Naive thymus-derived CD8-positive, alpha-beta T cell (primary cell): ENCODE measurements at regions of chr2 and their contacts with region 1.

Region 1: DNA sequence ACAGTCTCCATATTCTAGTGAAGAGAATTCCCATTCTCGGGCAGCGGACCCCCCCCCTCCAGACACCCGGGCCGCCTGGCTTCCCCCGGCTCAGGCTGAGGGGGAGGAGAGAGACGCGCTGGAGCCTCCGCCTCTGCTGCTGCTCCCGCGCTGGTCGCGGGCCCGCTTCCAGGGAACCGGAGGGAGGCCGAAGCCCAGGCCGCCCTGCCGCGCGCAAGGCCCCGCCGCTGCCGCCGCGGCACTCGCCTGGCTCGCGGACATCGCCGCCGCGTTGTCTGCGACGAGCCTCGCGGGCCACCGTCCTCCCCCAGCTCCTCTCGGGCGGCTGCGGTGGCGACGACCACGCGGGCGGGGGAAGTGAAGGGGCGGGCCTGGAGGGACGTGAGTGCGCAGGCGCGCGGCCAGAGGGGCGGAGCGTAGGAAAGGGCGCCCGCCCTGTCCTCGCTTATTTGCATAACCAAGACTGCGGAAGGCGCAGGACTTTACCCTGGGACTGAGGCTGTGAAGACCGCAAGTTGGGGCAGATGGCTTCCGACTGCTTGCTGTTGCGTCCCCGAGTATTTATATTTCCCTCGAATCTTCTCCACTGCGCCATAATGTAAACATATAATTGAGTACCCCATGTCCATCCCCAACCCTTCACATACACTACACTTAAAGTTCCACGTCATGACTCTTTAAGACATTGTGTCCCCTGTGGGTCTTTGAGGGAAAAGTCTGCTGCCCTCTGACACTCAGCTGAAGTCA is at the start of gene ARL5A:
- DNase-seq: peak; percentile 88 to 97 (median 96)
- ATAC-seq: peak; percentile 92 to 93
- H3K4me3 Mint-ChIP-seq: peak within 1 kb of the TSS; percentile 86 to 97 (median 94)
- H3K27ac Mint-ChIP-seq: peak within 1 kb of the TSS; percentile 90 to 97 (median 95)
- H3K4me1 Mint-ChIP-seq: peaks cover 25 to 57% (median 48%) of the 10 kb centered on the region in 4 donors
- H3K27me3 Mint-ChIP-seq: no peaks in the 10 kb centered on the region
- polyA plus RNA-seq, gene ARL5A: 43.2 to 64.0 (median 50.5) TPM

Region 2: DNA sequence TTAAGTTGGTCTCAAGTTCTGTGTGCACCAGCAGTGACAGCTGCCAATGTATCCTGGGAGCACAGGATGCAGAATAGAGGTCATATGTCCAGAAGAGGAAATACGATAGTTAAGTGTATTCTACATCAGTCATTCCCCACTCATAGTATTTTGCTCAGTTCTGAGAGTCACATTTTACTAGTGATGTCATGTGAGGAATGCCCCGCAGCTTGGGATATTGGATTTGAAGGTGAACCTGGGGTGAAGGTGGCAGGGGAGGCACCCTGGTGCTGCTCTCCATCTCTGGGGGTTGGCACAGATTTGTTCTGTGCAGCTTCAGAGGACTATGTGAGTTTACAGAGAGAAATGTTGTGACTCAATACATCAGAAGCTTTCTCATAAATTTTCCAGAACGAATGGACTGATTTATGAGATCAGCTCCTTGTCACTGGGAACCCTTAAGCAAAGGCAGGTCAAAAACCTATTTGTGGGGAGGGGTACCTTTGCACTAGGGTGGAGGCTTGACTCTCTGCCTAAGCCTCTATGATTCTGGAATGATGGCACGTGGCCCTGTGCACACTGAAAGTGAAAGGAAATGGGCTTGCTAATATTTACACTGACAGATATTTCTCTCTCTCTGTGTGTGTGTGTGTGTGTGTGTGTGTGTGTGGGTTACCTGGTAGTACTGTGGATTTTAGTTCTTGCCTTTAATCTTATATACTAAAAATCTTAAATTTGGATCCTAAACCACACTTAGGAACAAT is 190.0 kb before region 1 on chr2:
- POLR2A ChIA-PET with region 1: interaction called, 10 read pairs
- DNase-seq: peak in 7 of 10 donors; percentile 10 to 65 (median 36)
- ATAC-seq: peak; percentile 40 to 44
- H3K4me3 Mint-ChIP-seq: peak overlapping the region; percentile 69 to 88 (median 76)
- H3K27ac Mint-ChIP-seq: peak overlapping the region; percentile 86 to 96 (median 94)
- H3K4me1 Mint-ChIP-seq: peaks cover 22 to 57% (median 45%) of the 10 kb centered on the region in 4 donors
- H3K27me3 Mint-ChIP-seq: no peaks in the 10 kb centered on the region

Region 3: GRCh38 chr2:151851761-151852160 is 23.4 kb after region 1 on chr2:
- POLR2A ChIA-PET with region 1: no interaction called
- DNase-seq: no peak
- ATAC-seq: no peak
- H3K4me3 Mint-ChIP-seq: no peak overlapping the region
- H3K27ac Mint-ChIP-seq: no peak overlapping the region
- H3K4me1 Mint-ChIP-seq: no peaks in the 10 kb centered on the region
- H3K27me3 Mint-ChIP-seq: peaks cover 0 to 1% (median 0%) of the 10 kb centered on the region in 5 donors